Gastrocnemius medialis (tissue), 4 donors: ENCODE measurements at regions of chr19 and their contacts with region 1.

Region 1: DNA sequence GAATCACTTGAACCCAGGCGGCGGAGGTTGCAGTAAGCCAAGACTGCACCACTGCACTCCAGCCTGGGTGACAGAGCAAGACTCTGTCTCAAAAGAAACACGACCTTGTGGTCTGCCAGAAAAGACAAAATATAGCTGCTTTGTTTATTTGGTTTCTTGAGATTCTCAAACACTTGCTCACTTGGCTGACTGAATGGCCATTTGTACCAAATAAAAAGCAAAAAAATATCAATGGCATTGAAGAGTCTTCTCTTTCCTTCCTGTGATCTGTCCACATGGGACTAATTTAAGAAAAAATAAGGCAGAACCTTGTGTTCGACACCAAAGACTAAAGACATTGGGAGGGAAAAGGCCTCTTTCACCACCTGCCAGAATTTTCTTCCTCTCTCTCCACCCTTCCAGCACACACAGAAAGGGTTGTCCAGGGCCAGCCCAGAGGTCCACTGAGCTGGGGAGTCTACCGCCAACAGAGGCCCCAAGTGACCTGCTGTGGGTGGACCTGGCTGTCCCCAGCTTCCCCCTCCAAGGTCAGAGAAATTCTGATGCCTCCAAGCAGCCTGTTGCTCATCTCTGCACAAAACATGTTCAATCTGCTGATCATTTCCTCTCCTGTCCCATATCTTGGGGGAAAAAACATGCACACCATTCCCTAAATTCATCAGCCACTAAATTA is 5.9 kb downstream of the BRME1 start:
- DNase-seq: no peak
- ATAC-seq: no peak
- H3K4me3 ChIP-seq: no peak overlapping the region
- H3K27ac ChIP-seq: no peak overlapping the region
- H3K4me1 ChIP-seq: no peaks in the 10 kb centered on the region
- H3K27me3 ChIP-seq: no peaks in the 10 kb centered on the region
- CTCF ChIP-seq: no peak
- POLR2A ChIP-seq: no peak

Region 2: GRCh38 chr19:14059093-14059480 is 159.0 kb after region 1 on chr19:
- in situ Hi-C with region 1: loop called in 1 of 4 experiments (anchors 10 kb)
- intact Hi-C with region 1: no loop called
- DNase-seq: no peak
- ATAC-seq: no peak
- H3K4me3 ChIP-seq: no peak overlapping the region
- H3K27ac ChIP-seq: no peak overlapping the region
- H3K4me1 ChIP-seq: peaks cover 0 to 4% of the 10 kb centered on the region in 2 donors
- H3K27me3 ChIP-seq: peaks cover 20 to 60% (median 42%) of the 10 kb centered on the region in 3 donors
- CTCF ChIP-seq: peak in 4 of 5 experiments; percentile 49 to 68 (median 56)
- POLR2A ChIP-seq: no peak